Dorsolateral prefrontal cortex (tissue), 120 donors: ENCODE measurements at regions of chr4 and their contacts with region 1.

Region 1: GRCh38 chr4:87006676-87007527 is 72.1 kb downstream of the AFF1 start:
- DNase-seq: peak; percentile 82 to 95 (median 90)
- H3K4me3 ChIP-seq: peak overlapping the region; percentile 55 to 96 (median 81)
- H3K27ac ChIP-seq: peak overlapping the region; percentile 88 to 99 (median 97)
- H3K27me3 ChIP-seq: no peaks in the 10 kb centered on the region
- CTCF ChIP-seq: peak in 43 of 56 donors; percentile 3 to 58 (median 36)

Region 2: GRCh38 chr4:86934771-86935565 is 71.9 kb before region 1 on chr4 and contains the start of gene AFF1:
- intact Hi-C with region 1: loop called (anchors 1 kb)
- DNase-seq: peak; percentile 73 to 92 (median 88)
- H3K4me3 ChIP-seq: peak within 1 kb of the TSS; percentile 64 to 99 (median 93)
- H3K27ac ChIP-seq: peak within 1 kb of the TSS; percentile 66 to 96 (median 90)
- H3K27me3 ChIP-seq: no peaks in the 10 kb centered on the region
- CTCF ChIP-seq: peak; percentile 27 to 85 (median 63)
- total RNA-seq, gene AFF1: 37.6 to 89.2 (median 55.4) TPM

Region 3: GRCh38 chr4:87073199-87074120 is 66.6 kb after region 1 on chr4:
- intact Hi-C with region 1: loop called (anchors 1 to 2 kb)
- DNase-seq: peak; percentile 26 to 63 (median 60)
- H3K4me3 ChIP-seq: peak overlapping the region in 57 of 59 donors; percentile 0 to 62 (median 38)
- H3K27ac ChIP-seq: peak overlapping the region in 58 of 59 donors; percentile 2 to 96 (median 78)
- H3K27me3 ChIP-seq: no peaks in the 10 kb centered on the region
- CTCF ChIP-seq: peak in 1 of 56 donors; percentile 6

Region 4: DNA sequence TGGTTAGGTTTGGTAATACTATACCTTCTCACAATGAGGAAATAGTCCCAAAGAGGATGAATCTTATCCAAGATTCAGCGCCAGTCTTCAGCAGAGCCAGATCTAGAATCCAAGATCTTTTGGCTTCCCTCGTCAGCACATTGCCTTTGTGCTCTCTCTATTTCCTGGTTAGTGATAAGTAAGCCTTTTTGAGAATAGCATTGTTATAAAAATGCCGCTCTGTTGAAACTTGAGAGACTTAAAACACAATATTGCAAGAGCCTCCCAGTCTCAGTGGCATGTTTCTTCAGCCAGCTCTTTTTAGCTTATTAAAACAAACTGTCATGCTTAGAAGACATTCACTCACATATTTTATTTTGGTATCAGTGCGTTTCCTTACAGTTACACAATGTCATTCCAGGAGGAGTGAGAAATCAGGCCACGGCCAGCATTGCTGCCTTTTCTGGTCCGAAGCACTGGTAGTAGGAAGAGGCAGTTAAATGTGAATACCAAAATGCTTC is 72.1 kb after region 1 on chr4:
- intact Hi-C with region 1: loop called in 1 of 2 experiments (anchors 2 kb)
- DNase-seq: peak in 7 of 10 donors; percentile 27 to 67 (median 57)
- H3K4me3 ChIP-seq: peak overlapping the region in 47 of 59 donors; percentile 6 to 59 (median 33)
- H3K27ac ChIP-seq: peak overlapping the region; percentile 31 to 96 (median 90)
- H3K27me3 ChIP-seq: no peaks in the 10 kb centered on the region
- CTCF ChIP-seq: peak in 6 of 56 donors; percentile 4 to 25 (median 10)